WTC11 (cell line): ENCODE measurements at regions of chr4 and their contacts with region 1.

Region 1: GRCh38 chr4:1746265-1746691 is 25.0 kb downstream of the TACC3 start:
- DNase-seq: peak; percentile 98
- ATAC-seq: peak; percentile 87
- H3K4me3 Mint-ChIP-seq: no peak overlapping the region
- H3K27ac Mint-ChIP-seq: no peak overlapping the region
- H3K4me1 Mint-ChIP-seq: no peaks in the 10 kb centered on the region
- H3K27me3 Mint-ChIP-seq: peaks cover 2% of the 10 kb centered on the region; the same call in 1 of the 2 replicates
- CTCF ChIP-seq: peak; percentile 88

Region 2: GRCh38 chr4:1628892-1629698 is 117.2 kb before region 1 on chr4:
- CTCF ChIA-PET with region 1: interaction called, 10 read pairs
- POLR2A ChIA-PET with region 1: no interaction called
- DNase-seq: peak; percentile 87
- ATAC-seq: peak; percentile 93
- H3K4me3 Mint-ChIP-seq: no peak overlapping the region
- H3K27ac Mint-ChIP-seq: no peak overlapping the region
- H3K4me1 Mint-ChIP-seq: no peaks in the 10 kb centered on the region
- H3K27me3 Mint-ChIP-seq: no peaks in the 10 kb centered on the region
- CTCF ChIP-seq: peak; percentile 96

Region 3: GRCh38 chr4:1759818-1760223 is 13.5 kb after region 1 on chr4:
- CTCF ChIA-PET with region 1: interaction called, 44 read pairs
- POLR2A ChIA-PET with region 1: no interaction called
- DNase-seq: no peak
- ATAC-seq: peak; percentile 4; the same call in 1 of the 2 replicates
- H3K4me3 Mint-ChIP-seq: no peak overlapping the region
- H3K27ac Mint-ChIP-seq: no peak overlapping the region
- H3K4me1 Mint-ChIP-seq: no peaks in the 10 kb centered on the region
- H3K27me3 Mint-ChIP-seq: no peaks in the 10 kb centered on the region
- CTCF ChIP-seq: no peak

Region 4: DNA sequence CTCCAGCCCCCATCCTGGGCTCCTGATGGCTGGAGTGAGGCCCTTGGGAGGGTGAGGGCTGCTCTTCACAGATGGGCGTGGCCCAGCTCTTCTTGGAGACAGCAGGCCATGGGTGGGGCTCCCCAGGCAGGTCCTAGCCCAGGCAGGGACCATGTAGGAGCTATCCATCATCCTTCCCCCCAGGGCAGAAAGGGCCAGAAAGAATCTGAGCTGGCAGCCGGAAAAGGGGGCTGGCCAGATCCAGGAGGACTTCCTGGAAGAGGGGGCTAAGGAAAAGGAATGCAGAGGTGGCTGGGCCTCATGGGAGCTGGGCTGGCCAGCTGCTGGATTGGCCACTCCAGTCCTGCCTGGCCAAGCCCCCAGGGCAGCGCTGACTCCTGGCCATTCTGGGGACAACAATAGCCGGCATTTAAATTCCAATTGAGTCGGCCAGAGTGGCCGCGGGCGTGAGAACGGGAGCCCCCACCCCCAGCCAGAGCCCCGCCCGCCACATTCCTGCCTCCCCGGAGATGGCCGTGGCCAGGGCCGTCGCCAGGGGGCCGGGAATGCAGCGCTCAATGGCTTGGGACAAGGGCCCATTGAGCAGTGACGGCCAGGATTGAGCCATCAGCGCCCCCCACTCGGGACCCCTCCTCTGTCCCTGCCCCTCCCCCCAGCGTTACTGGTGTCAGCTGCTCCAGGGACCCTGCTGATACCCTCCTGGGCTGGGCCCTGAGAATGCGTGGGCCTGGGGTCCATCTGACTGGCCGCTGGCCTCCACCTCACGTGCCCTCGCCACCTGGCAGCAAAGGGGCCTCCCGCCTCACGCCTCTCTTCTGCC is 31.8 kb after region 1 on chr4:
- CTCF ChIA-PET with region 1: interaction called, 29 read pairs
- POLR2A ChIA-PET with region 1: interaction called, 3 read pairs
- DNase-seq: peak; percentile 91
- ATAC-seq: peak; percentile 72
- H3K4me3 Mint-ChIP-seq: no peak overlapping the region
- H3K27ac Mint-ChIP-seq: no peak overlapping the region
- H3K4me1 Mint-ChIP-seq: peaks cover 15% of the 10 kb centered on the region; the same call in 1 of the 2 replicates
- H3K27me3 Mint-ChIP-seq: no peaks in the 10 kb centered on the region
- CTCF ChIP-seq: no peak

Region 5: GRCh38 chr4:1809754-1810511 is 63.7 kb after region 1 on chr4:
- CTCF ChIA-PET with region 1: interaction called, 188 read pairs
- POLR2A ChIA-PET with region 1: no interaction called
- DNase-seq: peak; percentile 90
- ATAC-seq: peak; percentile 91
- H3K4me3 Mint-ChIP-seq: no peak overlapping the region
- H3K27ac Mint-ChIP-seq: no peak overlapping the region
- H3K4me1 Mint-ChIP-seq: no peaks in the 10 kb centered on the region
- H3K27me3 Mint-ChIP-seq: no peaks in the 10 kb centered on the region
- CTCF ChIP-seq: peak; percentile 92

Region 6: GRCh38 chr4:1910643-1911042 is 164.4 kb after region 1 on chr4:
- CTCF ChIA-PET with region 1: interaction called, 20 read pairs
- POLR2A ChIA-PET with region 1: no interaction called
- DNase-seq: peak; percentile 69
- ATAC-seq: peak; percentile 99
- H3K4me3 Mint-ChIP-seq: no peak overlapping the region
- H3K27ac Mint-ChIP-seq: peak overlapping the region; percentile 94
- H3K4me1 Mint-ChIP-seq: peaks cover 7% of the 10 kb centered on the region
- H3K27me3 Mint-ChIP-seq: no peaks in the 10 kb centered on the region
- CTCF ChIP-seq: peak; percentile 36; the same call in 1 of the 2 replicates